ENCODE measurements at regions of chr7 and their contacts with region 1.

Region 1: DNA sequence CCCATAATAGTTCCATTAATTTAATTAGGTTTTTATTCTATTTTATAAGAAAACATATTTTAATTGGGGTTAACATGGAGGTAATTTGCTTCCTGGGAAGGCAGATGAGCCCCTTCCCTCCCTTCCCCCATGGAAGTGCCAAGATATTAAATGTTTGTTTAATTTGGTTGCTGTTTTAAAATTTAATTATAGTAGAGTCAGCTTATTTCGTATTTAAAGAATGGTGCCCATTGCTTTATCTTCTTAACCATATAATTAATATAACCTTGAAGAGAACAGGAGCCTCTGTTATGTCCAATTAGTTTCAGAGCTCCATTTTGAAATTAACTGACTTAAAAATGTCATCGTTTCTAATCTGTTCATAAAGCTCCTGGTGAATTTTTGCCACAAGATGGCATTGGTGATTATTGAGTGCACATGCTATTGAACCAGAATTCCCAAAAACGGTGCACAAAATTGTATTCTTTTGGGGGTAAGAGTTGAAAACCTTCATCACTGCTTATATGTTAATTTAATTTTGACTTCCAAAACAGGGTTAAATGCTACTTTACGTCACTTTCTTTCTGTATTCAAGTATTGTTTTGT is 26.0 kb downstream of the KLHDC10 start:
- DNase-seq: no peak
- H3K4me3 Mint-ChIP-seq: no peak overlapping the region
- H3K27ac Mint-ChIP-seq: no peak overlapping the region
- H3K4me1 Mint-ChIP-seq: peaks cover 12% of the 10 kb centered on the region
- H3K27me3 Mint-ChIP-seq: no peaks in the 10 kb centered on the region

Region 2: DNA sequence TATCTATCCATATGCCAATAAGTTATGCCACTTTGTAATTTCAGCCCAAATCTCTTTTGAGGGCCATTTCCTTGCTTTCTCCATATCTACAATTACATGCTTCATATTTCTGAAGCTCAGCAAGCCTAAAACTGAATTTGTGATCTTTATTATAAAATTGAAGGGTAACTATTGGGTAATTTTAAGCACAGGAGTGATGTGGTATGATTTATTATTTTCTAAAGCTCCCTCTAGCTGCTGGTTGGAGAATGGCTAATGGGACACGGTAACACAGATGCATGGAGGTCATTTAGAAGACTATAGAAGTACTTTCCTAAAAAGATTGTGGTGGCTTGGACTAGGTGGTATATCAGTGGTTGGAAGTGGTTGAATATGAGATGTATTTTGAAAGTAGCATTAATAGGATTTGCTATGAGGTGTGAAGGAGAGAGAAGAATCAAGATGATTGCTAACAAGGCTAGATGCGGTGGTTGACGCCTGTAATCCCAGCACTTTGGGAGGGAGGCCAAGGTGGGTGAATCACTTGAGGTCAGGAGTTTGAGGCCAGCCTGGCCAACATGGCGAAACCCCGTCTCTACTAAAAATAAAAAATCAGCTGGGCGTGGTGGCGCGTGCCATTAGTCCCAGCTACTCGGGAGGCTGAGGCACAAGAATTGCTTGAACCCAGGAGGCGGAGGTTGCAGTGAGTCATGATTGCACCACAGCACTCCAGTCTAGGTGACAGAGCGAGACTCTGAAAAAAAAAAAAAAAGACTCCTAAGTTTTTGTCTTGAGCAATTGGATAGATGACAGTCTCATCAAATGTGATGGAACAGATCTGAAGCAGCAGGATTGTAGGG is 12.1 kb before region 1 on chr7:
- CTCF ChIA-PET with region 1: interaction called, 11 read pairs
- POLR2A ChIA-PET with region 1: interaction called, 5 read pairs
- intact Hi-C with region 1: no loop called
- DNase-seq: no peak
- H3K4me3 Mint-ChIP-seq: no peak overlapping the region
- H3K27ac Mint-ChIP-seq: no peak overlapping the region
- H3K4me1 Mint-ChIP-seq: peaks cover 18% of the 10 kb centered on the region
- H3K27me3 Mint-ChIP-seq: no peaks in the 10 kb centered on the region

Measured in activated CD4-positive, alpha-beta memory T cell treated with anti-CD3 and anti-CD28 coated beads for 36 hours (primary cell).